Calu3 (cell line): ENCODE measurements at regions of chr21 and their contacts with region 1.

Region 1: DNA sequence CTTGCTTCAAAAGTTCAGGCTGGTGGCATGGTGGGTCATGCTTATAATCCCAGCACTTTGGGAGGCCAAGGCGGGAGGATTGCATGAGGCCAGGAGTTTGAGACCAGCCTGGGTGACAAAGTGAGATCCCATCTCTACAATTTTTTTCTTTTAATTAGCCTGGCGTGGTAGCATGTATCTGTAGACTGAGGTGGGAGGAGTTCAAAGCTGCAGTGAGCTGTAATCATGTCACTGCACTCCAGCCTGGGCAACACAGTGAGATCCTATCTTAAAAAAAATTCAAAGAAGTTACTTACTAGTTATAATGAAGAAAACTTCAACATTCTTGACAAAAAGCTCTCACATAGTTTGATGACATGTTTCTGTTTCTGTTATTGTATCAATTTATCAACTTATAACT is 45.2 kb downstream of the SAMSN1 start:
- DNase-seq: no peak
- H3K4me3 Mint-ChIP-seq: no peak overlapping the region
- H3K27ac Mint-ChIP-seq: no peak overlapping the region
- H3K4me1 Mint-ChIP-seq: no peaks in the 10 kb centered on the region
- H3K27me3 Mint-ChIP-seq: no peaks in the 10 kb centered on the region
- CTCF ChIP-seq: no peak

Region 2: DNA sequence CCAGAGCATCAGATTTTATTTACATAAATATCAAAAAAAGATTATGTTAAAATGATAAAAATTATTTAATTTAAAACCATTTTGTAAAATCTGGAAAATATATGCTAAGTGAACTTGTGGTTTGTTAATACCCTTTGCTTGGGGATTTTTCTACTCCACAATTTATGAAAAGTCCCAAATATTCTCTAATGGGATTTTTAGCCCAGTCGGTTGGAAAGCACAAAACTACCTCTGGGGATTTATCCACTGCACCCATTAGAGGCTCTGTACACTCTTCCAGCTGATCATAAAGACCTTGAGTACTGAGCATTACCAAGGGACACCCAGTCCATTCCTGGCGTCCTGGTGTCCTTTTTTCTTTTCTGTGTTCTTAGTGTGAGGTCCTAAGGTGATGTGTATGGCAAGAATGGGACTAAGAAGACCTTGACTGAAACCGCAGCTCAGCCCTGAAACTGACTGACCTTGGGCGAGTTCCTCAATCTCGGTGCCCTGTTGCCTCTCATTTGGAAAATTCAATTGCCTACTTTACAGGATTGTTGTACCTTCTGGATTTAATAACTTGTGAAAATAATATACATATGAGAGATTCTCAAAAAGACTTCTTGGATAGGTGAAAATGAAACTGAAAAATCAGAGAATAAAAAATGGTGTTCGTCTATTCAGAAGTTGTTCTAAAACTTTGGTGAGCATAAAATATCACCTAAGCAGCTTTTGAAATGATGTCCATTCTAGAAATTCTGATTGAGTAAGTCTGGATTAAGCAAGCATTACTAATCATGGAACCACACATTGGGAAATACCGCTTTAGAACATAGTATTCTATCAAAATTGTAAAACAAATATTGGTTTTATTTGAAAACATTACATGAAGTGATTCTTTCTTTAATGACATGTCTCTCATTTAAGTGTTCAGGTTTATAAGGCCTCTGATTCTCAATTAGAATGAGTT is 66.7 kb after region 1 on chr21:
- CTCF ChIA-PET with region 1: no interaction called
- intact Hi-C with region 1: loop called (anchors 10 kb)
- DNase-seq: no peak
- H3K4me3 Mint-ChIP-seq: no peak overlapping the region
- H3K27ac Mint-ChIP-seq: no peak overlapping the region
- H3K4me1 Mint-ChIP-seq: no peaks in the 10 kb centered on the region
- H3K27me3 Mint-ChIP-seq: no peaks in the 10 kb centered on the region
- CTCF ChIP-seq: no peak